Heart right ventricle (tissue), 16 donors: ENCODE measurements at regions of chr12 and their contacts with region 1.

Region 1: GRCh38 chr12:69070319-69071090 is 137.5 kb upstream of the CPM start:
- DNase-seq: peak in 1 of 2 donors; percentile 54
- ATAC-seq: peak; percentile 74 to 86 (median 85)
- H3K4me3 ChIP-seq: no peak overlapping the region
- H3K27ac ChIP-seq: no peak overlapping the region
- H3K4me1 ChIP-seq: peaks cover 0 to 9% (median 0%) of the 10 kb centered on the region in 9 donors
- H3K27me3 ChIP-seq: peaks cover 0 to 2% (median 0%) of the 10 kb centered on the region in 7 donors
- CTCF ChIP-seq: peak; percentile 78 to 93 (median 90)

Region 2: GRCh38 chr12:68831272-68831671 is 239.2 kb before region 1 on chr12:
- intact Hi-C with region 1: loop called in 1 of 10 experiments (anchors 1 kb)
- DNase-seq: no peak
- ATAC-seq: no peak
- H3K4me3 ChIP-seq: no peak overlapping the region
- H3K27ac ChIP-seq: no peak overlapping the region
- H3K4me1 ChIP-seq: peaks cover 0 to 11% (median 0%) of the 10 kb centered on the region in 9 donors
- H3K27me3 ChIP-seq: no peaks in the 10 kb centered on the region
- CTCF ChIP-seq: no peak

Region 3: DNA sequence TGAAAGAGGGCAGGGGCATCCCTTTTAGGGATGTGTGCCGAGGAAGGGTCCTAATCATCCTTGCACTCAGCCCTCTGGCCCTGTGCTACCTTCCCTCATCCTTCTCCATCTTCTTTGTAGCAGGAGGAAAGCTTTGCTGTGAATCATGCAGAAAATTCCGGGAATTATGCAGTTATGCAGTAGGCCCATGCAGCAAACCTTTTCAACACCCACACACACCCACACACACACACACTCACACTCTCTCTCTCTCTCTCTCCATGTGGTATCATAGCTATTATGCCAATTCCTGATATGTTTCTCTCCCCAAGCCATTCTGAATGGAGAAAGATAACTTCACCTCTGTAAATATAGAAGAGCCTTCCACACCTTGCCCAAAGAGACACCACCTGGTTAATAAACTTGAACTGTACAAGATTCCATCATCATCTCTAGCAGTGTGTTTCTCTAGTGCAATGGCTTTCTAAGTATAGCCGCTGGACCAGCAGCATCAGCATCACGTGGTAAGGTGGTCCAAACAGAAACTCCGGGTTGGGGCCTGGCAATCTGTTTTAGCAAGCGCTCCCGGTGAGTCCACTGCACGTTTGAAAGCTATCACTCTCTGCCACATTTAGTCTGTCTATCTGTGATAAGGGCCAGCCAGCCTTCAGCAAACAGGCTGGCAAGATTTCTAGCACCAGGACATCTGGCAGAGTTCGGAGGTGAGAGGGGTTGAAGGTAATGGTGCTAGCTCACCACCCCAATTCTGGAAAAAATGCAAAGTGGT is 204.9 kb before region 1 on chr12:
- intact Hi-C with region 1: loop called (anchors 1 to 10 kb)
- DNase-seq: no peak
- ATAC-seq: no peak
- H3K4me3 ChIP-seq: no peak overlapping the region
- H3K27ac ChIP-seq: no peak overlapping the region
- H3K4me1 ChIP-seq: no peaks in the 10 kb centered on the region
- H3K27me3 ChIP-seq: no peaks in the 10 kb centered on the region
- CTCF ChIP-seq: no peak

Region 4: DNA sequence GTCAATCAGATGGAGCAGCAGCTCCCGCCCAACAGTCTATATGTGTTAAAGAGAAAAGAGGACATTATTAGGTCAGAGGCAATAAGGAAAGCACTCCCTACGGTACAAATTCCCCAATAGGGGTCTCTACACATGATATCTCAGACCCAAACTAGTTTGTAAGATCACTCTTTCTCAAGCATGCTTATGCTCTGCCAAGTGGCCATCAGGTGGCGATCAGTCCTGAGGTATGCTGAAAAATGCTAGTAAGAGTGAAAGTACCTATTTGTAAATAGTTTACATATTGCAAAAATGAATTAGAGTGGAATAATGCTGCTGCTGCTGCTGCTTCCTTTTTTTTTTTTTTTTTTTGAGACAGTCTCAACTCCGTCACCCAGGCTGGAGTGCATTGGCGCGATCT is 198.6 kb before region 1 on chr12:
- intact Hi-C with region 1: loop called in 4 of 10 experiments (anchors 5 to 10 kb)
- DNase-seq: no peak
- ATAC-seq: no peak
- H3K4me3 ChIP-seq: no peak overlapping the region
- H3K27ac ChIP-seq: no peak overlapping the region
- H3K4me1 ChIP-seq: peaks cover 0 to 9% (median 0%) of the 10 kb centered on the region in 9 donors
- H3K27me3 ChIP-seq: peaks cover 0 to 3% (median 0%) of the 10 kb centered on the region in 7 donors
- CTCF ChIP-seq: peak in 2 of 9 donors; percentile 4 to 12

Region 5: DNA sequence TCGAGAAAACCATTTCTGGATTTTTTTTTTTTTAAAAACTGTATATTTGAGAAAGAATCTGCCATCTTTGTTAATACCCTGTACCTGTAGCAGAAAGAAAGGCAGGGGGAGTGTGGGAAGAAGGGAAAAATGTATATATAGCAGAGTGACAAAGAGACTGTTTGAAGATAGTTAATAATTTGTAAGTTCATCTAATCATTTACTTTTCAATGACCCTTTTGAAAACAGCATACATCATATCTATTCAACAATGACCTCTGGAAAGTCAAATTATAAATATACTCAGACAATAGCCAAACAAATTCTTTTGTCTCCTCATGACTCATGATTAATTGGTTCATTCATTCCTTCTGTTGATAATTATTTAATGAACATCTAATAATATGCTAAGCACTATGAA is 126.7 kb before region 1 on chr12:
- intact Hi-C with region 1: loop called in 1 of 10 experiments (anchors 10 kb)
- DNase-seq: no peak
- ATAC-seq: no peak
- H3K4me3 ChIP-seq: no peak overlapping the region
- H3K27ac ChIP-seq: no peak overlapping the region
- H3K4me1 ChIP-seq: peaks cover 0 to 7% (median 0%) of the 10 kb centered on the region in 9 donors
- H3K27me3 ChIP-seq: no peaks in the 10 kb centered on the region
- CTCF ChIP-seq: no peak

Region 6: GRCh38 chr12:69173368-69173767 is 102.9 kb after region 1 on chr12:
- intact Hi-C with region 1: no loop called
- DNase-seq: no peak
- ATAC-seq: peak in 3 of 8 donors; percentile 33 to 49 (median 46)
- H3K4me3 ChIP-seq: no peak overlapping the region
- H3K27ac ChIP-seq: no peak overlapping the region
- H3K4me1 ChIP-seq: no peaks in the 10 kb centered on the region
- H3K27me3 ChIP-seq: no peaks in the 10 kb centered on the region
- CTCF ChIP-seq: no peak